AG04450 (cell line): ENCODE measurements at regions of chr10 and their contacts with region 1.

Region 1: DNA sequence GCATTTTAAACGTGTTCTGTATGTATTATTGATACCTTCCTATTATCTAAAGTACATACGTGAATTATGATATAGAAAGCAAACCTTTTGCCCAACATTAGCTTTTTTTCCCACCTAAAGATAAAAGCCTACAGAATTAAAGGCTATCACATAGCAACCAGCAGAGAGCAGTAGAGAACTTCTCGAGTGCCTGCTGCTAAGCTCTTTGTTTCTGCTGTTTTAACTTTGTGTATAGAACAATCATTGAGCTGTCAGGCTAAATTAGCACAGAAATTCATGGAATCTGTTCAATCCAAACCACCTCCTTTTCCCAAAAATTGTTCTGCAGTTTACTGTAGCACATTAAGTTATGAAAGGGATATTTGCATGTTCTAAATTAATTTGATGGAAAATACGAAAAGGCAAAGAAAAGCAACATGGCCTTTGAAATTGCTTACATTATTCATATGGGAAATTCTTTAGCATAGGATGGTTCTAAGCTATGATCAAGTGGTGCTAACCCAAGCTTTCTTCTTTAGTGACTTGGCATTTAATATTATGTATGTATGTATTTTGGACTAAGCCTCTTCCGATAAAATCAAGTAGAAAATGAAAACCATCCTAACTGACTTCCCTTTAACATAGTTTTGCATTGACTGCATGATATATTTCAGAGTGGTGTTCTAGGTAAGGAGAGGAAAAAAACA is 1288.5 kb downstream of the GATA3 start:
- DNase-seq: peak; percentile 10
- H3K4me3 ChIP-seq: no peak overlapping the region
- H3K27ac ChIP-seq: no peak overlapping the region
- H3K27me3 ChIP-seq: no peaks in the 10 kb centered on the region
- CTCF ChIP-seq: peak; percentile 89

Region 2: DNA sequence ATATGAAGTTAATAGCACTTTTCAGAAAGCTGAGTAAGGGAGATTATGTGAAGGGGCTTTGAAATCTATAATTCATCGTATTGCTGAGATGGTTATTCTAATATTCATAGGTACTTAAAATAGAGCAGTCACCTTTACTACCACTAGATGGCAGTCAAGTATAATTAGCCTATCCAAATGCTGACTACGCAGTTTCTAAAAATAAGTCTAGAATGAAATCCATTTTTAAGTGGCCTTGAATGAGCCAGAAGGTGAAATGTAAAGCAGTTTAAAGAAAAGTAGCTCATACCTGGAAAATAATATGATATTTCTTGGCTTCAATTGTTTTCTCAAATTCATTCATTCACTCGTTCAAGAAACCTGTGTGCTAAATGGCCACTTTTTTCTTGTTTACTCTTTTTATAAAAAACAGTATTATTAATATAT is 11.4 kb before region 1 on chr10:
- CTCF ChIA-PET with region 1: interaction called, 54 read pairs
- POLR2A ChIA-PET with region 1: no interaction called
- DNase-seq: peak; percentile 16
- H3K4me3 ChIP-seq: no peak overlapping the region
- H3K27ac ChIP-seq: no peak overlapping the region
- H3K27me3 ChIP-seq: peaks cover 2% of the 10 kb centered on the region
- CTCF ChIP-seq: peak; percentile 82

Region 3: GRCh38 chr10:9357471-9357870 is 14.4 kb after region 1 on chr10:
- CTCF ChIA-PET with region 1: interaction called, 15 read pairs
- POLR2A ChIA-PET with region 1: no interaction called
- DNase-seq: no peak
- H3K4me3 ChIP-seq: no peak overlapping the region
- H3K27ac ChIP-seq: no peak overlapping the region
- H3K27me3 ChIP-seq: no peaks in the 10 kb centered on the region
- CTCF ChIP-seq: no peak

Region 4: GRCh38 chr10:9535744-9536143 is 192.7 kb after region 1 on chr10:
- CTCF ChIA-PET with region 1: no interaction called
- POLR2A ChIA-PET with region 1: no interaction called
- DNase-seq: no peak
- H3K4me3 ChIP-seq: no peak overlapping the region
- H3K27ac ChIP-seq: no peak overlapping the region
- H3K27me3 ChIP-seq: no peaks in the 10 kb centered on the region
- CTCF ChIP-seq: no peak

Region 5: DNA sequence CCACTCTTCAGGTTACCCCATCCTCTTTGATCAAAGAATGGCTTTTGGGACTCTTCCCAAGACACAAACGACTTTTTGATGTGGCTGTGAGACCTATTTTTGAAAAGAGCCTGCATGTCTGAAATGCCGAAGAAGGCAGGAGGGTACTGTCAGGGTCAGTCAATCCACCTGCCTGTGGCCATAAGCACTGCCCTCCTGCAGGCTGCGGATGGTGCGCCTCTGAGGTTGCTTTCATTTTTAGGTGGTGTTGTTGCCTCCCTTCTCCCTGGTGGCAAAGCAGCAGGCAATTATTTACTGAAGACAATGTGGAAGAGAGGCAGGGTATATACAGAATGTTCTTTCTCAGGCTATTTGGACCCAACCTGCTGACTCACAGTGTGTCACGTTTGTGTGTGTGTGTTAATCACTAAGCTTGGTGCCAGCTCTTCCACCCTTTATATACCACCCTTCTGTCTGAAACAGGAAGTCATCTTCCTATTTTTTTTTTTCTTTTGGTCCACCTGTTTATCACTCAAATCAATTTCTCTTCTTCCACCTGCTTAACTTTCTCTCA is 253.4 kb after region 1 on chr10:
- CTCF ChIA-PET with region 1: interaction called, 12 read pairs
- POLR2A ChIA-PET with region 1: no interaction called
- DNase-seq: no peak
- H3K4me3 ChIP-seq: no peak overlapping the region
- H3K27ac ChIP-seq: no peak overlapping the region
- H3K27me3 ChIP-seq: no peaks in the 10 kb centered on the region
- CTCF ChIP-seq: no peak

Region 6: GRCh38 chr10:9608602-9609001 is 265.6 kb after region 1 on chr10:
- CTCF ChIA-PET with region 1: interaction called, 25 read pairs
- POLR2A ChIA-PET with region 1: no interaction called
- DNase-seq: no peak
- H3K4me3 ChIP-seq: no peak overlapping the region
- H3K27ac ChIP-seq: no peak overlapping the region
- H3K27me3 ChIP-seq: no peaks in the 10 kb centered on the region
- CTCF ChIP-seq: peak; percentile 68

Region 7: GRCh38 chr10:11036407-11037011 is 1693.5 kb after region 1 on chr10:
- CTCF ChIA-PET with region 1: interaction called, 15 read pairs
- POLR2A ChIA-PET with region 1: no interaction called
- DNase-seq: peak; percentile 16
- H3K4me3 ChIP-seq: no peak overlapping the region
- H3K27ac ChIP-seq: no peak overlapping the region
- H3K27me3 ChIP-seq: no peaks in the 10 kb centered on the region
- CTCF ChIP-seq: peak; percentile 67

Region 8: GRCh38 chr10:11270135-11270857 is 1927.3 kb after region 1 on chr10:
- CTCF ChIA-PET with region 1: interaction called, 29 read pairs
- POLR2A ChIA-PET with region 1: no interaction called
- DNase-seq: peak; percentile 27
- H3K4me3 ChIP-seq: no peak overlapping the region
- H3K27ac ChIP-seq: no peak overlapping the region
- H3K27me3 ChIP-seq: no peaks in the 10 kb centered on the region
- CTCF ChIP-seq: peak; percentile 99